Heart right ventricle (tissue), 16 donors: ENCODE measurements at regions of chrX and their contacts with region 1.

Region 1: GRCh38 chrX:63350941-63351616 is at the start of gene SPIN4:
- DNase-seq: peak; percentile 81 to 88
- ATAC-seq: peak; percentile 97 to 100 (median 99)
- H3K4me3 ChIP-seq: peak within 1 kb of the TSS; percentile 48 to 75 (median 66)
- H3K27ac ChIP-seq: peak within 1 kb of the TSS in 9 of 10 donors; percentile 5 to 75 (median 65)
- H3K4me1 ChIP-seq: peaks cover 0 to 10% (median 0%) of the 10 kb centered on the region in 9 donors
- H3K27me3 ChIP-seq: peaks cover 0 to 6% (median 0%) of the 10 kb centered on the region in 7 donors
- CTCF ChIP-seq: no peak
- total RNA-seq, gene SPIN4: 0.28 to 1.2 (median 0.80) TPM

Region 2: GRCh38 chrX:63513825-63514568 is 162.9 kb after region 1 on chrX:
- intact Hi-C with region 1: loop called in 1 of 10 experiments (anchors 5 kb)
- DNase-seq: peak in 1 of 2 donors; percentile 28
- ATAC-seq: peak in 7 of 8 donors; percentile 38 to 83 (median 74)
- H3K4me3 ChIP-seq: no peak overlapping the region
- H3K27ac ChIP-seq: peak overlapping the region in 5 of 10 donors; percentile 4 to 35 (median 21)
- H3K4me1 ChIP-seq: peaks cover 0 to 32% (median 11%) of the 10 kb centered on the region in 9 donors
- H3K27me3 ChIP-seq: no peaks in the 10 kb centered on the region
- CTCF ChIP-seq: no peak

Region 3: GRCh38 chrX:63686878-63687714 is 336.0 kb after region 1 on chrX:
- intact Hi-C with region 1: loop called in 1 of 10 experiments (anchors 5 kb)
- DNase-seq: no peak
- ATAC-seq: peak in 3 of 8 donors; percentile 45 to 65 (median 46)
- H3K4me3 ChIP-seq: no peak overlapping the region
- H3K27ac ChIP-seq: no peak overlapping the region
- H3K4me1 ChIP-seq: no peaks in the 10 kb centered on the region
- H3K27me3 ChIP-seq: no peaks in the 10 kb centered on the region
- CTCF ChIP-seq: peak in 8 of 9 donors; percentile 23 to 77 (median 52)

Region 4: DNA sequence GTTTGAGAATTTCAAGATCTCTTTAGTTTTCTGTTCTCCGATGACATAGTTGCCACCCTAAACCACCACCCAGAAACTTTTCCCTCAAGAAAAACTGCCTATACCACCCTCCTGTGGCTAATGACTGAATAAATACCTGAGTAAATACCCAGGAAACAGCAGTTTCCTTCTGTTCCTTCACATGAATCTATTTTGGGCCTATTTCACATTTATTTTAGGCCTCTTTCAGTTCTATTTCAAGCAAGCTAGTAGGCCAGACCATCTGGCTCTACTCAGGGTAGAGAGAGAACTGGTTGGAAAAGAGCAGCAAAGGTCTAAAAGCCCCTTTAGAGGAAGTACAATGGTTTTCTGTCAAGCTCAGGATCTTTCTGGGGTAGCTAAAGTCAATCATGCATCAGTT is 410.6 kb after region 1 on chrX:
- intact Hi-C with region 1: loop called in 1 of 10 experiments (anchors 5 kb)
- DNase-seq: no peak
- ATAC-seq: peak in 3 of 8 donors; percentile 26 to 39 (median 29)
- H3K4me3 ChIP-seq: no peak overlapping the region
- H3K27ac ChIP-seq: no peak overlapping the region
- H3K4me1 ChIP-seq: peaks cover 0 to 14% (median 0%) of the 10 kb centered on the region in 9 donors
- H3K27me3 ChIP-seq: peaks cover 0 to 7% (median 0%) of the 10 kb centered on the region in 7 donors
- CTCF ChIP-seq: peak in 5 of 9 donors; percentile 17 to 38 (median 31)